Activated CD4-positive, alpha-beta T cell treated with anti-CD3 and anti-CD28 coated beads for 36 hours (primary cell): ENCODE measurements at regions of chr4 and their contacts with region 1.

Region 1: GRCh38 chr4:168917138-168917779 is 92.8 kb downstream of the CBR4 start:
- DNase-seq: no peak
- ATAC-seq: no peak
- H3K4me3 Mint-ChIP-seq: no peak overlapping the region
- H3K27ac Mint-ChIP-seq: no peak overlapping the region
- H3K4me1 Mint-ChIP-seq: no peaks in the 10 kb centered on the region
- H3K27me3 Mint-ChIP-seq: no peaks in the 10 kb centered on the region

Region 2: GRCh38 chr4:168174308-168174707 is 743.0 kb before region 1 on chr4:
- CTCF ChIA-PET with region 1: no interaction called
- POLR2A ChIA-PET with region 1: no interaction called
- intact Hi-C with region 1: no loop called
- DNase-seq: no peak
- ATAC-seq: no peak
- H3K4me3 Mint-ChIP-seq: no peak overlapping the region
- H3K27ac Mint-ChIP-seq: no peak overlapping the region
- H3K4me1 Mint-ChIP-seq: no peaks in the 10 kb centered on the region
- H3K27me3 Mint-ChIP-seq: no peaks in the 10 kb centered on the region

Region 3: DNA sequence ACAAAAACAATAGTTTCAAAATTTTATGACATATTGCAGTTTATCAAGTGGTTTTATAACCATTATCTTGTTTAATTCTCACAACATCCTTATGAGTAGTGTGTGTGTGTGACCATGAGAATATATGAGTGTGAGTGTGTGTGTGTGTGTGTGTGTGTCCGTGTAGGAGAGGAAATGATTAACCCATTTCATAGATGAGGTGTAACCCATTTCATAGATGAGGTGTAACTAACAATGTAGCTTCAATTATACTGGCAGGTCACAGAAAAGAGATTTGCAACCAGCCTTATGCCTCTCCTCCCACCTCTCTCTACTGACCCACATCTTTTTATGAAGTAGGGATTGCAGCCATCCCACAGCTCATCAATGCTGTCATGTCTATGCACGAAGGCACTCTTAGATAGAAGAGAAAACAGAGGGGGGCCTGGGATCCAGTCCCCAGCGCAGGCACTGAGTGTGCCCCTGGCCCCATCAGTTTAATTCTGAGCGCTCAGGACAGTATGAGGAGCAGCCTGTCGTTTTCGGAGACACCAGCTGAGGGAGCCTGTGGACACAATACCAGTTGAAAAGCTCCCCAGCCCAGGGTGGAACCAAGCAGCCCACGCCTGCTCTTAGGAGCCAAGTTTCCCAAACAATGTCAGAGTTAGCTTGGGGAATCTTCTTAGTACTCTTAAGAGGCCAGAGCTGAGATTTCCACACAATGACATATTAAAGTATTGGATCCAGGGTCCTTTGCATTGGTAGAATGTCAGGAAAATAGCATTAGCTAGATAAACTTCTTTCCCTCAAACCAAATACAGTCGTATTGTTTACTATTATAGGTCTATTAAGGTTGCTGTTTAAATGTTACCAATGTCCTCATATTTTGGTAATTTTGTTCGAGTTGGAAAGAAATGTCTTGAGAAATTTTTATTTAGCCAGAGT is 331.8 kb before region 1 on chr4:
- CTCF ChIA-PET with region 1: no interaction called
- POLR2A ChIA-PET with region 1: no interaction called
- intact Hi-C with region 1: loop called (anchors 5 to 10 kb)
- DNase-seq: peak; percentile 61
- ATAC-seq: peak; percentile 77
- H3K4me3 Mint-ChIP-seq: no peak overlapping the region
- H3K27ac Mint-ChIP-seq: no peak overlapping the region
- H3K4me1 Mint-ChIP-seq: peaks cover 6% of the 10 kb centered on the region
- H3K27me3 Mint-ChIP-seq: peaks cover 19% of the 10 kb centered on the region

Region 4: DNA sequence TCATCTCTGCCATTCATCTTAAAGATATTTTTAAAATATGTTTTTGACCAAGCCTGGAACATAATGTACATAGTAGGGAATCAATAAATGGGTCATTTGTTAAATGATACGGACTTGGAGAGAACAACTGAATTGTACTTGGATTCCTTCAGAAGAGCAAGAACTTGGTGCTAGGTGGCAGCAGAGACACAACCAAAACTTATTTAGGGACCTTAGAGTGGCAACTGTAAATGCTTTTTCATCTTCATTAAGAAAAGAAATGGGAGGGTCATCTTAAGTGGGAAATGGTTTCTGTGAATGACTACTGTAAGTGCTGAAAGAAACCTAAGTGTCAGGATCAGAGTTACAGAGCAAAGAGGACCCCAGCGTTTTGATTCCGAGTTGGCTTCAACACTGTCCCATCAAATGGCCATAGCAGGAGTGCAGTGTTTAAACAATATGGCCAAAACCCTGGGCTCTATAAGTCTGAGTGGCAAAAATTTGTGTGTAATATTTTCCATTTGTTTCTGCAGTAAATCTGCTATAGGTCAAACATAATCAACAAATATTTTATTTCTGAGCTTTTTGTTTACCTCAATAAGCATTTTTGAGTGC is 206.8 kb before region 1 on chr4:
- CTCF ChIA-PET with region 1: interaction called, 3 read pairs
- POLR2A ChIA-PET with region 1: no interaction called
- intact Hi-C with region 1: loop called (anchors 2 kb)
- DNase-seq: peak; percentile 28
- ATAC-seq: no peak
- H3K4me3 Mint-ChIP-seq: no peak overlapping the region
- H3K27ac Mint-ChIP-seq: no peak overlapping the region
- H3K4me1 Mint-ChIP-seq: peaks cover 15% of the 10 kb centered on the region
- H3K27me3 Mint-ChIP-seq: no peaks in the 10 kb centered on the region

Region 5: DNA sequence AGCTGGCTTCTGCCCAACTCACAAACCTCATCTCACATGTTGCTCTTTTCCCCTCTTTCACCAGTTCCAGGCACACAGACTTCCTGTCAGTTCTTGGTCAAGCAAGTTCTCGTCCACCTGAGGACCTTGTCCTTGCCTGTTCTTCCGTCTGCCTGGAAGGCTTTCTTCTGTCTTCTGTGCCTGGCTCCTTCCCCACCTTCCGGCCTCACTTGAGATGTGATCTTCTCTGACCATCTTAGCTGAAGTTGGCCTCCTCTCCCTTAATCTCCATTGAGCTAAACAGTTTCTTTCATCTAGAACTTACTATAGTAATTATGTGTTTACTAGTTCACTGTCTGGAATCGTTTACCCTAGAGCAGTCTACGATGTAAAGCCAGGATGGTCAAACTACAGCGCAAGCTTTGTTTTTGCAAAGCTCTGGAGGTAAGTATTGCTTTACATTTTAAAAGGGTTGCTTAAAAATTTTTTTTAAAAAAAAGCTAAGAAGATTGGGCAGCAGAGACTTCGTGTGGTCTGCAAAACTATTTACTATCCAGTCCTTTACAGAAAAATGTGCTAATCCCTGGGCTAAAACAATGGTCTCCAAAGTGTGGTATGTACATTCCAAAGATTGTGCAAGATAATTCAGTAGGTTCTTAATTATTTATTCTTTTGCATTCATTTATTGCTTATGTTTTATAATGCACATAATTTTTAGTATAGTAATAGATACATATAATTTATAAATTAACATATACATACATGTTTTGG is 995.6 kb after region 1 on chr4:
- CTCF ChIA-PET with region 1: no interaction called
- POLR2A ChIA-PET with region 1: no interaction called
- intact Hi-C with region 1: no loop called
- DNase-seq: no peak
- ATAC-seq: no peak
- H3K4me3 Mint-ChIP-seq: no peak overlapping the region
- H3K27ac Mint-ChIP-seq: no peak overlapping the region
- H3K4me1 Mint-ChIP-seq: no peaks in the 10 kb centered on the region
- H3K27me3 Mint-ChIP-seq: peaks cover 6% of the 10 kb centered on the region